Kidney (tissue), 22 donors: ENCODE measurements at regions of chr13 and their contacts with region 1.

Region 1: GRCh38 chr13:36273431-36273830 is 24.2 kb downstream of the CCDC169 start:
- DNase-seq: no peak
- H3K4me3 ChIP-seq: no peak overlapping the region
- H3K27ac ChIP-seq: no peak overlapping the region
- H3K4me1 ChIP-seq: no peaks in the 10 kb centered on the region
- H3K27me3 ChIP-seq: no peaks in the 10 kb centered on the region
- CTCF ChIP-seq: no peak

Region 2: DNA sequence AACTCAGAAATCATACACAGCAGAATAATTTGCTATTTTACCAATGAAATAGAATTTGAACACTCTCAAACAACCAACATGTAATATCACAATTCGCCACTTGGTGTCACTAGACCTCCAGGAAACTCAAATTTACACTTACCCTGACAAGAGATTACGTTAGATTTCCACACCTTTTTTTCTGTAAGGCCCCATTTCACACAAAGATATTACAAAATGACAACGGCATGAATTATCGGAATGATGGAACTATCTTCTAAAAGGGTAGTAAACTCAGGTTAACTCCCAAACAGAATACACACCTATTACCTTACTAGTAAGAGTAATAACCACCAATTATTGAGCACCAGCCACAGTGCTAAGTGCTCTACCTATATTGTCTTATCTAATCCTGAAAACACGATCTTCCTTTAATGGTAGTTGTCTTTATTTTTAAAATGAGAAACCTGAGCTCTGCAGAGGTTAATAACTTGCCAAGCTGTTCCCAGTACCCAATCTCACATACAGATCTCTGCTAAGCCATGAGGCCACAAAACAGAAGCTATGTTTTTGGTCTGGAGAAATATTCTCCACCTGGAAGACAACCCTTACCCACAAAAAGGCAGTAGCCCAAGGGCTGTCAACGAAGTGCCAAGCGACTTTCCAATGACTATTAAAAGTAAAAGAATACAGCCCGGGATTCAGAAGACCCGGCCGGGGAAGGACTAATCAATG is 294.7 kb before region 1 on chr13:
- intact Hi-C with region 1: loop called (anchors 5 kb)
- DNase-seq: peak in 3 of 5 donors; percentile 50 to 79 (median 77)
- H3K4me3 ChIP-seq: no peak overlapping the region
- H3K27ac ChIP-seq: peak overlapping the region in 1 of 2 donors; percentile 33
- H3K4me1 ChIP-seq: no peaks in the 10 kb centered on the region
- H3K27me3 ChIP-seq: no peaks in the 10 kb centered on the region
- CTCF ChIP-seq: peak; percentile 54

Region 3: GRCh38 chr13:36029166-36029565 is 244.3 kb before region 1 on chr13:
- intact Hi-C with region 1: no loop called
- DNase-seq: no peak
- H3K4me3 ChIP-seq: no peak overlapping the region
- H3K27ac ChIP-seq: no peak overlapping the region
- H3K4me1 ChIP-seq: peaks cover 0 to 2% (median 0%) of the 10 kb centered on the region in 3 donors
- H3K27me3 ChIP-seq: no peaks in the 10 kb centered on the region
- CTCF ChIP-seq: no peak